ENCODE measurements at regions of chr12 and their contacts with region 1.

Region 1: GRCh38 chr12:109888179-109889020 is 8.1 kb upstream of the GLTP start:
- DNase-seq: peak; percentile 36
- ATAC-seq: peak; percentile 68
- H3K4me3 Mint-ChIP-seq: peak overlapping the region; percentile 29
- H3K27ac Mint-ChIP-seq: peak overlapping the region; percentile 99
- H3K4me1 Mint-ChIP-seq: peaks cover 49% of the 10 kb centered on the region
- H3K27me3 Mint-ChIP-seq: peaks cover 11% of the 10 kb centered on the region

Region 2: GRCh38 chr12:109899783-109900751 is 11.7 kb after region 1 on chr12 and contains the start of gene TCHP:
- CTCF ChIA-PET with region 1: interaction called, 13 read pairs
- POLR2A ChIA-PET with region 1: interaction called, 11 read pairs
- DNase-seq: peak; percentile 83
- ATAC-seq: peak; percentile 92
- H3K4me3 Mint-ChIP-seq: peak within 1 kb of the TSS; percentile 93
- H3K27ac Mint-ChIP-seq: peak within 1 kb of the TSS; percentile 96
- H3K4me1 Mint-ChIP-seq: peaks cover 21% of the 10 kb centered on the region
- H3K27me3 Mint-ChIP-seq: no peaks in the 10 kb centered on the region
- total RNA-seq, gene TCHP: 31.0 to 33.3 TPM